ENCODE measurements at regions of chr1 and their contacts with region 1.

Region 1: DNA sequence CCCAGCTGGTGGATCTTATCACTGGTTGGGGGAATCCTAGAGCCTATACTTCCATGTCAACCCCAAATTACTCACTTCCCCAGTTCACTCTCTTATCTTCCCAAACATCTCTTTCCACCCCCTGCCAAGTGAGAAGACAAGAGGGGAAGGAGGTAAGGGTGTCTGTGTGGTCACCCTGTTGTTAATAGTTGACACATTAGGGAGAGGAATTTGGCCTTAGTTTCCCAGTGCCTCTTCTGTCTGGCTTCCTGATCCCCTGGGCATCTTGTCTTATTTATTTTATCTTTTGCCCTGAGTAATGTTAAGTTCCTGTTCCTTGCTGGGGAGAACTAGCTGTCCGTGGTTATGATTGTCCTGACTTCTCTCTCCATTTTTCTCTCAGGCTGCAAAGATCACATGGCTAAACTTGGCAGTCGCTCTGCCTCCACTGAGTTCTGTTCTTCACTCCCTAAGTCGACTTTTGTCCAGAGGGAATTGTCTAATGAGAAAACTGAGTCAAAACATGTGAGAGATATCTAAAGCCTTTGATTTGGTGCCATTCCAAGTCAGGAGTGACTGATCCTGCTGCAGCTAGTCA is 157.1 kb upstream of the SYT6 start:
- DNase-seq: no peak
- H3K4me3 ChIP-seq: no peak overlapping the region
- H3K27ac ChIP-seq: peak overlapping the region in 1 of 2 donors; percentile 12
- H3K4me1 ChIP-seq: no peaks in the 10 kb centered on the region
- H3K27me3 ChIP-seq: no peaks in the 10 kb centered on the region
- CTCF ChIP-seq: no peak
- POLR2A ChIP-seq: no peak

Region 2: GRCh38 chr1:113303267-113303666 is 1007.5 kb before region 1 on chr1:
- intact Hi-C with region 1: no loop called
- DNase-seq: no peak
- H3K4me3 ChIP-seq: no peak overlapping the region
- H3K27ac ChIP-seq: no peak overlapping the region
- H3K4me1 ChIP-seq: no peaks in the 10 kb centered on the region
- H3K27me3 ChIP-seq: no peaks in the 10 kb centered on the region
- CTCF ChIP-seq: no peak
- POLR2A ChIP-seq: no peak

Region 3: GRCh38 chr1:114272593-114272992 is 38.2 kb before region 1 on chr1:
- intact Hi-C with region 1: loop called (anchors 2 kb)
- DNase-seq: no peak
- H3K4me3 ChIP-seq: no peak overlapping the region
- H3K27ac ChIP-seq: no peak overlapping the region
- H3K4me1 ChIP-seq: no peaks in the 10 kb centered on the region
- H3K27me3 ChIP-seq: no peaks in the 10 kb centered on the region
- CTCF ChIP-seq: no peak
- POLR2A ChIP-seq: no peak

Region 4: DNA sequence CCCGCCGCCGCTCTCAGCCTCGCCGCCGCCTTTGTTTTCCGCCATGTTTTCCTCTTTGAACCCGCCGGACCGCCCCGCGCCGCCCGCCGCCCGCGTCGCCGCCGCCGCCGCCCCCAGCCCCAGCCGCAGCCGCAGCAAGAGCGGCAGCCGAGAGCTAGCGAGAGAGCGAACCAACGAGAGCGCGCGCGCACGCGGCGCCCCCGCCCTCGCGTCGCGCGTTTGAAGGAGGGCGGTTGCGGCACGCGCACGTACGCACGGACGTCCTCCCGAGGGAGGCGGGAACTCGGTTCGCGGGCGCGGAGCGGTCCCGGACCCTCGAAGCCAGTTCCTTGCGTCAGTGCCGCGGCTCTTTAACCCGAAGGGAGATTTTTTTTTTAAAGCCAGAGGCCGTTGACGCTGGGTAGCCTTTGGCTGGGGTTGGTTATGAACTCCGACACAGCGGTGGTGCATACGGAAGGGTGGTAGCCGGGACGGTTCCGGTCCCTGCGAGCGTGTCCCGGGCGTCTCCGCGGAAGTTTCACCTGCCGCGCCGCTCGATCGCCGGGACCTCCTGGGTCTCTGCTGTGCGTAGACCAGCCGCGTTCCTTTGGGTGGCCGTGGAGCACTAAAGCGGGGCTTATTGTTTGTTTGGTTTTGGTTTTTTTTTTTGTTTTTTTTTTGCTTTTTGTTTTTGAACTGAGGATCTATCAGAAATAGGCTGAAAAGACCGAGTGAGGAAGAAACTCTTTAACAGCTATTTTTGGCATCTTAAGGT is 200.4 kb after region 1 on chr1 and contains the start of gene TRIM33:
- intact Hi-C with region 1: no loop called
- DNase-seq: peak; percentile 80 to 86
- H3K4me3 ChIP-seq: peak within 1 kb of the TSS; percentile 89 to 97 (median 89)
- H3K27ac ChIP-seq: peak within 1 kb of the TSS; percentile 95
- H3K4me1 ChIP-seq: no peaks in the 10 kb centered on the region
- H3K27me3 ChIP-seq: no peaks in the 10 kb centered on the region
- CTCF ChIP-seq: no peak
- POLR2A ChIP-seq: peak; percentile 76
- total RNA-seq, gene TRIM33: 40.8 to 80.9 (median 56.4) TPM

Region 5: GRCh38 chr1:114716304-114717170 is 405.8 kb after region 1 on chr1 and contains the start of gene NRAS:
- intact Hi-C with region 1: no loop called
- DNase-seq: peak; percentile 86 to 91
- H3K4me3 ChIP-seq: peak within 1 kb of the TSS; percentile 68 to 89 (median 86)
- H3K27ac ChIP-seq: peak within 1 kb of the TSS; percentile 88 to 89
- H3K4me1 ChIP-seq: no peaks in the 10 kb centered on the region
- H3K27me3 ChIP-seq: no peaks in the 10 kb centered on the region
- CTCF ChIP-seq: no peak
- POLR2A ChIP-seq: peak; percentile 23
- total RNA-seq, gene NRAS: 23.4 to 27.4 (median 25.6) TPM

Measured in breast epithelium (tissue), 4 donors.